MCF 10A (cell line): ENCODE measurements at regions of chr17 and their contacts with region 1.

Region 1: DNA sequence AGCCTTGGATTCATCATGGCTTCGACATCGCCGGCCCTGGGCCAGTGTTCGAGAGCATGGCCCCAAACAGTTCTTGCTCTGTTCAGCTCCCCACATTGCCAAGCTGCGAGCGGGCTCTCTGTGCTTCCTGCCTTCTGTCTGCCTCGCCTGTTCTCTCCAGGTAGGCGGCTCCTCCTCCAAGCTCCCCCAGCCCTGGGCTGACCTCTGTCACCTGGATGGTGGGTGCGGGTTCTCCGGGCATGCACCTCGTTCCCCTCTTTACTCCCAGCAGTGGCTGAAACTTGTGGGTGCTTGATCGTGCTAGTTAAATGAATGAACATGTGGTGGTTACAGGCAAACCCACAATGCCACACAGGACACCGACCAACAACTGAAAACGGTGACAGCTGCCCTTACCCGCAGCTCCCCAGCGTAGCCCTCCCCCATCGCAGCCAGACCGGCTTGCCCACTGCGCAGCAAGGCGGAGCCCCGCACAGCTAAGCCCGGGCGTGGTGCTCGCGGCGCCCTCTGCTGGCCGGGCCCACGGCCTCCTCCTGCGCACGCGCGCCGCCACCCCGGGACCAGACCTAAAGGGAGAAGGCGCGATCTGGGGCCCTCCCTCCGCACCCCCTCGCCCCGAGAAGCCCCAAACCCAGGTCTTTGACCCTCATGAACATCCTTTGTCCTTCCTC is 23.0 kb upstream of the EIF1 start:
- DNase-seq: peak; percentile 78
- H3K4me3 Mint-ChIP-seq: peak overlapping the region; percentile 70
- H3K27ac Mint-ChIP-seq: peak overlapping the region; percentile 66
- H3K4me1 Mint-ChIP-seq: peaks cover 28% of the 10 kb centered on the region
- H3K27me3 Mint-ChIP-seq: no peaks in the 10 kb centered on the region
- CTCF ChIP-seq: peak; percentile 95

Region 2: DNA sequence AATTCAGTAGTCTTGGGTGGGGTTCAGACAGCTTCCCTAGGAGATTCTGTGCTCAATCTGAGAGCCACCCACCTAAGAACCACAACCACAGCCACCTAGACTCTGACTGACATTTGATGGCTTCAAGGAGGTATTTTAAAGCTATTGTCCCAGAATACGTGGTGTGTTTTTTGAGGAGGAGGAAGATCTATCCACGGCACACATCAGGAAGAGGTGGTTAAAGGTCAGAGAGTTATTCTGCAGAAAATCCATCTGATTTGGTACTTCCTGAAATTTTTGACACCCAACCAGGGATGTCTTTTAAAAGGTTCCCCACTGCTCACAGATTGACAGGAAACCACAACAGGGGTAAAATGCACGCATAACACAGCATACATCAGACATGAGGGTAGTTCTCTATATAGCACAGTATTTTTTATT is 1043.2 kb before region 1 on chr17:
- CTCF ChIA-PET with region 1: interaction called, 3 read pairs
- POLR2A ChIA-PET with region 1: no interaction called
- intact Hi-C with region 1: loop called (anchors 2 kb)
- DNase-seq: no peak
- H3K4me3 Mint-ChIP-seq: no peak overlapping the region
- H3K27ac Mint-ChIP-seq: no peak overlapping the region
- H3K4me1 Mint-ChIP-seq: no peaks in the 10 kb centered on the region
- H3K27me3 Mint-ChIP-seq: no peaks in the 10 kb centered on the region
- CTCF ChIP-seq: no peak

Region 3: GRCh38 chr17:40909351-40909750 is 756.4 kb before region 1 on chr17:
- CTCF ChIA-PET with region 1: interaction called, 12 read pairs
- POLR2A ChIA-PET with region 1: interaction called, 4 read pairs
- intact Hi-C with region 1: loop called (anchors 1 kb)
- DNase-seq: peak; percentile 96
- H3K4me3 Mint-ChIP-seq: peak overlapping the region; percentile 61
- H3K27ac Mint-ChIP-seq: peak overlapping the region; percentile 91
- H3K4me1 Mint-ChIP-seq: peaks cover 16% of the 10 kb centered on the region
- H3K27me3 Mint-ChIP-seq: no peaks in the 10 kb centered on the region
- CTCF ChIP-seq: peak; percentile 71

Region 4: GRCh38 chr17:41496820-41497408 is 168.8 kb before region 1 on chr17:
- CTCF ChIA-PET with region 1: interaction called, 10 read pairs
- POLR2A ChIA-PET with region 1: no interaction called
- intact Hi-C with region 1: loop called (anchors 5 kb)
- DNase-seq: peak; percentile 94
- H3K4me3 Mint-ChIP-seq: no peak overlapping the region
- H3K27ac Mint-ChIP-seq: peak overlapping the region; percentile 68
- H3K4me1 Mint-ChIP-seq: peaks cover 25% of the 10 kb centered on the region
- H3K27me3 Mint-ChIP-seq: no peaks in the 10 kb centered on the region
- CTCF ChIP-seq: peak; percentile 88

Region 5: DNA sequence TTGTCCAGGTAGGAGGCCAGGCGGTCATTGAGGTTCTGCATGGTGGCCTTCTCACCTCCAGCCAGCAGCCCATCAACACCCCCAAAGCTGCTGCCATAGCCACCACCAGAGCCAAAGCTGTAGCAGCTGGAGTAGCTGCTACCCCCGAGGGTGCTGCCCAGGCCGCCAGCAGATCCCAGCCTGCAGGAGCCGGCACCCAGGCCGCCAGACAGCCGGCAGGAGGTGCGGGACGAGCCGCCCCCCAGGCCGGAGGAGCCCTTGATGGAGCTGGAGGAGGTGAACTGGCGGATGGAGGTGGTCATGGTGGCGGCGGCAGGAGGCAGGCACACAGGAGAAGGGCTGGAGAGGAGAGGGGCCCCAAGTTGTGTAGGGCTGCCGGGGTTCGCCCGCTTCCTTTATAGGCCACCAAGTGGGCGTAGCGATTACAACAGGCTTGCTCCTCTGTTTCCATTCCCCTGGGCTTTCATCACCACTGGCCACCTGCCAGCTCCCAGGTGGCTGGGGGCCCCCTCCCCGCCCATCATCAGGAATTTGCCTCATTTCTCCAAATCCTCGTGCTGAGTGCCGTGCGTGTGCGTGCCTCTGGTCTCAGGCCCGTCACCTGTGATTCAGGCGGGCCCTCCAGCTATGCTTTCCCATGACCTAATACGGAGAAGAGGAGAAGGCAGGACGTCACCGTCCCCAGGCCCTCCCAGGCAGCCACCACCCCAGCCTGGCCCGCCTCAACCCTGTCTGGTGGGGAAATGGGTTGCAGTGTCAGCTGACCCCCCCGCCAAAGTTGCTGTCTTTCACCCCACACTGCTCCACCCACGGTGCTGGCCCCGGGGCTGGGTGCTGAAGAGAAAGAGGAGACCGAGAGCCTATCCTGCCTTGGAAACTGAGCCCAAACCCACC is 41.2 kb before region 1 on chr17 and contains the start of gene KRT17:
- CTCF ChIA-PET with region 1: interaction called, 9 read pairs
- POLR2A ChIA-PET with region 1: interaction called, 16 read pairs
- intact Hi-C with region 1: no loop called
- DNase-seq: peak; percentile 93
- H3K4me3 Mint-ChIP-seq: peak within 1 kb of the TSS; percentile 86
- H3K27ac Mint-ChIP-seq: peak within 1 kb of the TSS; percentile 89
- H3K4me1 Mint-ChIP-seq: peaks cover 47% of the 10 kb centered on the region
- H3K27me3 Mint-ChIP-seq: no peaks in the 10 kb centered on the region
- CTCF ChIP-seq: peak; percentile 19
- total RNA-seq, gene KRT17: 1,990 and 4,105 TPM in 2 replicates

Region 6: DNA sequence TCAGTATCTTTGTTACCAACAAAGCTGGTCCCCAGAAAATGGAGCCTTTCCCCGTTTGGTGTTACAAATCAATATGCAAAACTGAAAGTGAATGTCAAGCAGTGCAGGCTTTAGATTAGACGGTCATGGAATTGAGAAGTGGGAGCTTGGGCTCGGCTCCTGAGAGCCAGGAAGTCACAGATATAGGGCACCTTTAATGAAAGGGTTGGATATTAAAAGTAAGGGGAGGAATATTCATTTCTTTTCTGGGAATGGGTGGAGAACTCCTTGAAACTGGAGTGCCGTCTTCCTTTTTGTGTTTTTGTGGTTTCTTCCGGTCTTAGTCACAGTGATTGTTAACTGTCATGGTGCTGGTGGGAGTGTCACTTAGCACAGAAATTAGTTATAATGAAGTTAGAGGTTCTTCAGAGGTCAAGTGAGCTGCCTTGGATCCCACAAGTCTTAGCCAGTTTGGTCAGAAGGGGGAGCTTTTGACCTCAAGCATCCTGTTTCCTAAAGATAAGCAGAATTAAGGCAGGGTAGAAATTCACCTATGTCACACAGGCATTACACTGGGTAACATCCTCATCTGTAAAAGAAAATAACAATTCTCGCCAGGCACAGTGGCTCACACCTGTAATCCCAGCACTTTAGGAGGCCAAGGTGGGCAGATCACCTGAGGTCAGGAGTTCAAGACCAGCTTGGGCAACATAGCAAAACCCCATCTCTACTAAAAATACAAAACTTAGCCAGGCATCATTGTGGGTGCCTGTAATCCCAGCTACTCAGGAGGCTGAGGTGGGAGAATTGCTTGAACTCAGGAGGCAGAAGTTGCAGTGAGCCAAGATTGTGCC is 13.4 kb after region 1 on chr17:
- CTCF ChIA-PET with region 1: interaction called, 14 read pairs
- POLR2A ChIA-PET with region 1: interaction called, 21 read pairs
- intact Hi-C with region 1: no loop called
- DNase-seq: peak; percentile 91
- H3K4me3 Mint-ChIP-seq: peak overlapping the region; percentile 77
- H3K27ac Mint-ChIP-seq: peak overlapping the region; percentile 91
- H3K4me1 Mint-ChIP-seq: peaks cover 14% of the 10 kb centered on the region
- H3K27me3 Mint-ChIP-seq: no peaks in the 10 kb centered on the region
- CTCF ChIP-seq: peak; percentile 18

Region 7: DNA sequence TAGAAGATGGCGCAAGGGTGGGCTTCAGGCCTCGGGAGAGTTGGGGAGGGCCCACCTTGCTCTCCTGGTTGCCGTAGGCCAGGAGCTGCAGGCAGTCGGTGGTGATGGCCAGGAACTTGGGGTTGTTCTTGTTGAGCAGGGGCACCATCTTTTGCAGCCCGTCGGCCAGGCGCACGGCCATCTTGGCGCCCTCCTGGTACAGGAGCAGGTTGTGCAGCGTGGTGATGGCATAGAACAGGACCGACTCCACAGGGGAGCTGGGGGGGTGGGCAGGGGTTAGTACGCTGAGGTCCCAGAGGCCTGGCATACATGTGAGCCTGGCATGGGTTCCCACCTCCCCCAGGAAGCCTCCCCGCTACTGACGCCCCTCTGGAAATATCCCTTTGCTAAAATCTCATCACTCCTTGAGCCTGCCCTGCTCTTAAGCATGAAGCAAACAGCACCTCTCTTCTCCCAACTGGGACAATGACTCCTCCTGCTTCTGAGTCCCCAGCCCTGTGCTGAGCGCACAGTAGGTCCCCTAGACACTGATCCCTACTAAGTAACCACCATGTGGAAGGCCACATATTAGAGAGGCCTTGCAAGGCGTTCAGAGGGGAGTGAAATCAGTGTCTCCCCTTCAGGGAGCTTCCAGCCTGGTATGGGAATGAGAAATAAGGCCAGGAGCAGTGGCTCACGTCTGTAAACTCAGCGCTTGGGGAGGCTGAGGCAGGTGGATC is 101.8 kb after region 1 on chr17:
- CTCF ChIA-PET with region 1: no interaction called
- POLR2A ChIA-PET with region 1: no interaction called
- intact Hi-C with region 1: no loop called
- DNase-seq: no peak
- H3K4me3 Mint-ChIP-seq: no peak overlapping the region
- H3K27ac Mint-ChIP-seq: no peak overlapping the region
- H3K4me1 Mint-ChIP-seq: no peaks in the 10 kb centered on the region
- H3K27me3 Mint-ChIP-seq: no peaks in the 10 kb centered on the region
- CTCF ChIP-seq: no peak